Uterus (tissue), 4 donors: ENCODE measurements at regions of chrX and their contacts with region 1.

Region 1: DNA sequence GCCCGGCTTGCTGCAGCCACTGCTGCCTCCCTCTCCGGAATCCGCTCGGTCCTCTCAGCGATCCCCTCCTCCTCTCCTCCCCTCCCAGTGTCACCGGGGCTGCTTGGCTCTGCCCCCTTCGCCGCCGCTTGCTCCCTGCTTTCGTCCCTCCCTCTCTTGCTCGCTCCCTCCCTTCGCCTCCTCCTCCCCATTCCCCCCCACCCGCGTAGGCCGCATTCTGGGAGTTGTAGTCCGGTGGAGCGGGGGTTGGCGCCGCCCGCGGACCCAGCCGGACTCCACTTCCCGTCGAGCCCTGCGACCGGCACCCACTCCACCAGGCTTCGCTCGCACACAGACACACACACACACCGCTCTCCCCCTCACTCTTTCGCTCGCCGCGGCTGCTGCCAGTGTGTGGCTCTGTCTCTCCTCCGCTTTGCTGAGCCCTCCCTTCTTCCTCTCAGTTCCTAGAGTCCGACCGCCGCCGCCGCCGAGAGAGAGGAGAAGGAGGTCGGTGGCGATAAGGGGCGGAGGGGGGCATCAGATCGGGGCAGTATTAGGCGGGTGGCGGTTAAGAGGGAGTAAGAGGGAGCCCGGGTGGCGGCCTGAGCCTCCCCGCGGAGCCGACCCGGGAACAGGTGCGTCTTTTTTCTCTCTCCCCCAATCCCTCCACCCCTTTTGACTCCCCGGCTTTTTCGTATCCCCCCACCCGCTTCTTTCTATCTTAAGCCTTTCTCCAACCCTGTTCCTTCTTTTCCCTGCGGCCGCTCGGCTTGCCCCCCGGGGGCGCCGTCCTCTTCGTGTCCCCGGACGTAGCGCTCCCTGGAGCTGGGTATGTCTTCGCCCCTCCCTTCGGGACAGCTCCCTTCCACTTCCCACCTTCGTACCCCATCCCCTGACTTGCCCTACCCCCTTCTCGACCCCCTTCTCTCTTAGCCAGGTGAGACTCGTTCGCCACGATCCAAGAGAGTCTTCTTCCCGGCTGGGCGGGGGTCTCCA is at the start of gene BCORL1:
- DNase-seq: peak; percentile 89 to 90
- H3K4me3 ChIP-seq: no peak within 1 kb of the TSS
- H3K27ac ChIP-seq: peak within 1 kb of the TSS; percentile 80 to 90
- H3K4me1 ChIP-seq: no peaks in the 10 kb centered on the region
- H3K27me3 ChIP-seq: no peaks in the 10 kb centered on the region
- CTCF ChIP-seq: no peak
- POLR2A ChIP-seq: peak in 1 of 2 donors; percentile 77
- total RNA-seq, gene BCORL1: 0.26 to 50.8 (median 4.3) TPM

Region 2: DNA sequence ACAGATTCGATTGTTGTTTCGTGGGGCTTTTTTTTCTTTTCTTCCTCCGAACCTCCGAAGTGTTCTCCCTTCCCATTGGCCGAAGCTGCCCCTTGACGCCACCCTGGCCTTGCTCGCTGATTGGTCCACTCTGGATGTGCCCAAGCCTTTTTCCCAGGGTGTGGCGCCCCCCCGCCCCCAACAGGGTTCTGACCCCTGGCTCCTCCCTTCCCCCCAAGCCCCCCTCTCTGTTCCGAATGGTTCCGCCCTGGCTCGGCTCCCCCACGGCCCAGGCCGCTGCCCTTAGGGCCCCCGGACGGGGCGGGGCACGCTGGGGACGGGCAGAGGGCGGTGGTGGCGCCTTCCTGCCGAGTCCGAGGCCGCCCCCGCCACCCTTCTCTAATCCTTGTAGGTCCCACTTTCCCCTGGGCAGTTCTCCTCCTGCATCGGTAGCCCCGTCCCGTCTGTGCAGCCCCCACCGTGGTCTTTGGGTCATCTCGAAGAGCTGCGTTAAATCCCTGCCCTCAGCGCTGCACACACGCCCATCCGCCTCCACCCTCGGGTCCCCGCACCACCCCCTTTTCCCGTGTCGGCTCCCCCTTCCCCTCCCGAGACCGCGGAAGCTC is 51.0 kb before region 1 on chrX:
- intact Hi-C with region 1: loop called (anchors 10 kb)
- DNase-seq: peak; percentile 89 to 95
- H3K4me3 ChIP-seq: peak overlapping the region; percentile 53 to 59
- H3K27ac ChIP-seq: peak overlapping the region; percentile 87 to 95
- H3K4me1 ChIP-seq: no peaks in the 10 kb centered on the region
- H3K27me3 ChIP-seq: no peaks in the 10 kb centered on the region
- CTCF ChIP-seq: no peak
- POLR2A ChIP-seq: peak in 1 of 2 donors; percentile 45